ENCODE measurements at regions of chr14 and their contacts with region 1.

Region 1: GRCh38 chr14:53539489-53540126 is 386.5 kb upstream of the DDHD1 start:
- DNase-seq: peak; percentile 67
- H3K4me3 ChIP-seq: no peak overlapping the region
- H3K27ac ChIP-seq: peak overlapping the region; percentile 31
- H3K4me1 ChIP-seq: peaks cover 18% of the 10 kb centered on the region
- H3K27me3 ChIP-seq: no peaks in the 10 kb centered on the region
- CTCF ChIP-seq: peak; percentile 93

Region 2: GRCh38 chr14:52741865-52742264 is 797.7 kb before region 1 on chr14:
- intact Hi-C with region 1: no loop called
- DNase-seq: no peak
- H3K4me3 ChIP-seq: no peak overlapping the region
- H3K27ac ChIP-seq: peak overlapping the region; percentile 60
- H3K4me1 ChIP-seq: peaks cover 36% of the 10 kb centered on the region
- H3K27me3 ChIP-seq: no peaks in the 10 kb centered on the region
- CTCF ChIP-seq: no peak

Region 3: GRCh38 chr14:53796734-53797133 is 257.1 kb after region 1 on chr14:
- intact Hi-C with region 1: no loop called
- DNase-seq: no peak
- H3K4me3 ChIP-seq: no peak overlapping the region
- H3K27ac ChIP-seq: no peak overlapping the region
- H3K4me1 ChIP-seq: peaks cover 9% of the 10 kb centered on the region
- H3K27me3 ChIP-seq: peaks cover 4% of the 10 kb centered on the region
- CTCF ChIP-seq: no peak

Region 4: GRCh38 chr14:54175298-54175942 is 635.8 kb after region 1 on chr14:
- intact Hi-C with region 1: loop called (anchors 5 kb)
- DNase-seq: no peak
- H3K4me3 ChIP-seq: no peak overlapping the region
- H3K27ac ChIP-seq: peak overlapping the region; percentile 66
- H3K4me1 ChIP-seq: peaks cover 45% of the 10 kb centered on the region
- H3K27me3 ChIP-seq: peaks cover 36% of the 10 kb centered on the region
- CTCF ChIP-seq: peak; percentile 89

Region 5: GRCh38 chr14:54338696-54339317 is 799.2 kb after region 1 on chr14:
- intact Hi-C with region 1: loop called (anchors 10 kb)
- DNase-seq: no peak
- H3K4me3 ChIP-seq: no peak overlapping the region
- H3K27ac ChIP-seq: no peak overlapping the region
- H3K4me1 ChIP-seq: peaks cover 7% of the 10 kb centered on the region
- H3K27me3 ChIP-seq: peaks cover 10% of the 10 kb centered on the region
- CTCF ChIP-seq: no peak

Region 6: DNA sequence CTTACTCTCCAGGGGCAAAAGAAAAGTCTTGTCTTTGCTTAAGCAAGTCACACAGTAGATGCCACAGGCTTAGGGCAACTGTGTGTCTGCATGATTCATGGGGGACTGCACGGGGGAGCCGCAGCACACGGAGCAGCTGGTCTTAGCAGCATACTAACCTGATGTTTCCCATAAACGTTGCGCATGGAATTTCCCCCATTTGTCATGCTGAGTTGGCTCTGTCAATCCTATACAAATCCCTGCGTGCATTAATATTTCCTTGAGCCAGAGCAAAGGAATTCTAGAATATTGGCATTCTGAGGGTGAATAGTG is 1098.5 kb after region 1 on chr14:
- intact Hi-C with region 1: no loop called
- DNase-seq: no peak
- H3K4me3 ChIP-seq: no peak overlapping the region
- H3K27ac ChIP-seq: no peak overlapping the region
- H3K4me1 ChIP-seq: peaks cover 93% of the 10 kb centered on the region
- H3K27me3 ChIP-seq: no peaks in the 10 kb centered on the region
- CTCF ChIP-seq: no peak